ENCODE measurements at regions of chr10 and their contacts with region 1.

Region 1: GRCh38 chr10:62284221-62284620 is 15.6 kb upstream of the RTKN2 start:
- DNase-seq: no peak
- ATAC-seq: no peak
- H3K4me3 ChIP-seq: no peak overlapping the region
- H3K27ac ChIP-seq: no peak overlapping the region
- H3K4me1 ChIP-seq: no peaks in the 10 kb centered on the region
- H3K27me3 ChIP-seq: no peaks in the 10 kb centered on the region
- CTCF ChIP-seq: no peak
- POLR2A ChIP-seq: no peak

Region 2: GRCh38 chr10:62422068-62422590 is 137.9 kb after region 1 on chr10:
- intact Hi-C with region 1: loop called in 1 of 10 experiments (anchors 10 kb)
- DNase-seq: no peak
- ATAC-seq: peak in 1 of 4 donors; percentile 38
- H3K4me3 ChIP-seq: no peak overlapping the region
- H3K27ac ChIP-seq: no peak overlapping the region
- H3K4me1 ChIP-seq: no peaks in the 10 kb centered on the region
- H3K27me3 ChIP-seq: peaks cover 0 to 6% (median 0%) of the 10 kb centered on the region in 9 donors
- CTCF ChIP-seq: no peak
- POLR2A ChIP-seq: no peak

Measured in heart left ventricle (tissue), 16 donors.